ENCODE measurements at regions of chr18 and their contacts with region 1.

Region 1: DNA sequence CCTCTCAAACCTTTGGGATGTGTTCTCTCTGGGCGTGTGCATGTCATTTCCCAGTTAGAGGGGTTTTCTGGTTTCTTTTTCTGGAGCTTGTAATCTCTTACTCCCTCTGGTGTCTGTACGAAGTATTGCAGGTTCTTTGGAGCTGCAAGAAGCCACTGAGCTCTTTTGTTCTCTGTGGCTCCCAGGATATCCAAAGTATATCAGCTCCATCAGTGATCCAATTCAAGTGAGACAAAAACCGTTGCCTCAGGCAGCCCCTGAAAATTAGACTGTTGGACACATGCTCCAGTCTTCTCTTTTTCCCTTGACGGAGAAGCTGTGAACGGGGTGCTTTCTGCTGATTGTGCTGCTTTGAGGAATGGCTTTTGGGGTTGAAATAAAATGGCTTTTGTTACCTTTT is 59.0 kb upstream of the LDLRAD4 start:
- DNase-seq: no peak
- ATAC-seq: peak; percentile 79
- H3K4me3 ChIP-seq: no peak overlapping the region
- H3K27ac ChIP-seq: no peak overlapping the region
- H3K4me1 ChIP-seq: no peaks in the 10 kb centered on the region
- H3K27me3 ChIP-seq: no peaks in the 10 kb centered on the region; a peak in 1 of 4 replicates
- CTCF ChIP-seq: peak; percentile 73 to 80 (median 74)
- EP300 ChIP-seq: no peak
- POLR2A ChIP-seq: no peak
- RAD21 ChIP-seq: peak; percentile 70

Region 2: GRCh38 chr18:12744103-12744502 is 415.5 kb before region 1 on chr18:
- CTCF ChIA-PET with region 1: interaction called, 11 read pairs
- POLR2A ChIA-PET with region 1: no interaction called
- RAD21 ChIA-PET with region 1: interaction called, 17 read pairs
- SMC1A ChIA-PET with region 1: interaction called, 5 read pairs
- in situ Hi-C with region 1: no loop called
- intact Hi-C with region 1: loop called (anchors 5 kb)
- DNase-seq: no peak
- ATAC-seq: peak; percentile 77
- H3K4me3 ChIP-seq: no peak overlapping the region
- H3K27ac ChIP-seq: no peak overlapping the region
- H3K4me1 ChIP-seq: no peaks in the 10 kb centered on the region
- H3K27me3 ChIP-seq: no peaks in the 10 kb centered on the region
- CTCF ChIP-seq: peak; percentile 25 to 62 (median 53); a peak in 5 of 6 replicates
- EP300 ChIP-seq: no peak
- POLR2A ChIP-seq: no peak
- RAD21 ChIP-seq: peak; percentile 87

Region 3: DNA sequence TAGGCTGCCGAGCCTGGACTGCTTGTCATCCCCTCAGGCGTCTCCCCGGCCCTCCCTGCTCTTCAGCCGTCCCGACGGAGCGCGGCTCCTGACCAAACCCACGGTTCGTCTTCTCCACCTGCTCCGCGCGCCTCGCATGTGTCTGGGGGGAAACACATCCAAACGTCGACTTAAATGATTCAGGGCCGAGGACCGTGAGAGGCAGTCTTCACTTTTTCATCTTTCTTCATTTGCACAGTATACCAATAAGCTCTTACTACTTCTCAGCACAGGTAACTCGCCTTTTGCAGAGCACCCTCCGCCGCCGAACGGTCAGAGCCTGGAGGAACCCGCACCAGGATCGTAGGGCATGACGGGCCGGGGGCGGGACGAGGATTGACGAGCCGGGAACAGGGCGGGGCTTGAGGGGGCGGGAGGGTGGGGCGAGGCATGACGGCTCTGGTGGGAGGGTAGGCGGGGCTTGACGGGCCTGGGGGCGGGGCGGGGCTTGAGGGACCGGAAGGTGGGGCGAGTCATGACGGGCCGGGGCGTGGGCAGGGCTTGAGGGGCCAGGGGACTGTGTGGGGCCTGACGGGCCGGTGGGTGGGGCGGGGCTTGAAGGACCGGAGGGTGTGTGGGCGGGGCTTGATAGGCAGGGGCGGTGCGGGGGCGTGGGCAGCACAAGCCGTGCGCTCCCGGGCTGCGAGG is 212.1 kb before region 1 on chr18 and contains the start of gene SEH1L:
- CTCF ChIA-PET with region 1: interaction called, 3 read pairs
- POLR2A ChIA-PET with region 1: interaction called, 3 read pairs
- RAD21 ChIA-PET with region 1: interaction called, 3 read pairs
- SMC1A ChIA-PET with region 1: no interaction called
- in situ Hi-C with region 1: no loop called
- intact Hi-C with region 1: loop called (anchors 10 kb)
- DNase-seq: peak; percentile 89
- ATAC-seq: peak; percentile 92
- H3K4me3 ChIP-seq: peak within 1 kb of the TSS; percentile 92
- H3K27ac ChIP-seq: peak within 1 kb of the TSS; percentile 87
- H3K4me1 ChIP-seq: peaks cover 4% of the 10 kb centered on the region; the same call in 1 of the 2 replicates
- H3K27me3 ChIP-seq: no peaks in the 10 kb centered on the region
- CTCF ChIP-seq: no peak
- EP300 ChIP-seq: no peak
- POLR2A ChIP-seq: 0 out of 2 replicates have a peak, but pooled peaks have one; percentile 7
- RAD21 ChIP-seq: no peak
- polyA plus RNA-seq, gene SEH1L: 27.5 to 52.4 TPM

Region 4: GRCh38 chr18:13022644-13023043 is 136.9 kb before region 1 on chr18:
- CTCF ChIA-PET with region 1: interaction called, 11 read pairs
- POLR2A ChIA-PET with region 1: no interaction called
- RAD21 ChIA-PET with region 1: no interaction called
- SMC1A ChIA-PET with region 1: interaction called, 5 read pairs
- in situ Hi-C with region 1: no loop called
- intact Hi-C with region 1: no loop called
- DNase-seq: no peak
- ATAC-seq: no peak
- H3K4me3 ChIP-seq: no peak overlapping the region
- H3K27ac ChIP-seq: no peak overlapping the region
- H3K4me1 ChIP-seq: peaks cover 4% of the 10 kb centered on the region
- H3K27me3 ChIP-seq: no peaks in the 10 kb centered on the region
- CTCF ChIP-seq: no peak
- EP300 ChIP-seq: no peak
- POLR2A ChIP-seq: no peak
- RAD21 ChIP-seq: no peak

Region 5: DNA sequence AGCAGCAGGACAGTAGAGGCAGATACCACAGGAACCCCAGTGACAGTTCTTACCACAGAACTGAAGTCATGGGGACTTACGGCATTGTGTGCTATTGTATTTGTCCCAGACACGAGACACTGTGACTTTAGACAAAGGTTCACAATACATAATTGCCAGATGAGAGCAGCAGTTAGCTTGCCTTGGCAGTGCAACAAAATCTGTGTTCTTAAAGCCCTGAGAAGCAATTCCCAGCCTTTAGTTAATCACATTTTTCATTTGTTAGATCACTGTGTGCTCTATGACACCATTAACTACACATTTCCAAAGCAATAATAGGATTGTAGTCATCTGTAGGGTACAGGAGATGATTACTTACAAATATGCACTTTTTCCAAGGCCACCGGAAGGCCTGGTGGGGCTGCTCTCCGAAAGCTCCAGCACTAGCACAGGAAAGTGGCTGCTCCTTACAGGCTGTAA is 38.6 kb before region 1 on chr18:
- CTCF ChIA-PET with region 1: interaction called, 14 read pairs
- POLR2A ChIA-PET with region 1: no interaction called
- RAD21 ChIA-PET with region 1: interaction called, 6 read pairs
- SMC1A ChIA-PET with region 1: interaction called, 11 read pairs
- in situ Hi-C with region 1: no loop called
- intact Hi-C with region 1: no loop called
- DNase-seq: no peak
- ATAC-seq: no peak
- H3K4me3 ChIP-seq: no peak overlapping the region
- H3K27ac ChIP-seq: no peak overlapping the region
- H3K4me1 ChIP-seq: no peaks in the 10 kb centered on the region
- H3K27me3 ChIP-seq: no peaks in the 10 kb centered on the region
- CTCF ChIP-seq: no peak
- EP300 ChIP-seq: no peak
- POLR2A ChIP-seq: no peak
- RAD21 ChIP-seq: no peak

Region 6: DNA sequence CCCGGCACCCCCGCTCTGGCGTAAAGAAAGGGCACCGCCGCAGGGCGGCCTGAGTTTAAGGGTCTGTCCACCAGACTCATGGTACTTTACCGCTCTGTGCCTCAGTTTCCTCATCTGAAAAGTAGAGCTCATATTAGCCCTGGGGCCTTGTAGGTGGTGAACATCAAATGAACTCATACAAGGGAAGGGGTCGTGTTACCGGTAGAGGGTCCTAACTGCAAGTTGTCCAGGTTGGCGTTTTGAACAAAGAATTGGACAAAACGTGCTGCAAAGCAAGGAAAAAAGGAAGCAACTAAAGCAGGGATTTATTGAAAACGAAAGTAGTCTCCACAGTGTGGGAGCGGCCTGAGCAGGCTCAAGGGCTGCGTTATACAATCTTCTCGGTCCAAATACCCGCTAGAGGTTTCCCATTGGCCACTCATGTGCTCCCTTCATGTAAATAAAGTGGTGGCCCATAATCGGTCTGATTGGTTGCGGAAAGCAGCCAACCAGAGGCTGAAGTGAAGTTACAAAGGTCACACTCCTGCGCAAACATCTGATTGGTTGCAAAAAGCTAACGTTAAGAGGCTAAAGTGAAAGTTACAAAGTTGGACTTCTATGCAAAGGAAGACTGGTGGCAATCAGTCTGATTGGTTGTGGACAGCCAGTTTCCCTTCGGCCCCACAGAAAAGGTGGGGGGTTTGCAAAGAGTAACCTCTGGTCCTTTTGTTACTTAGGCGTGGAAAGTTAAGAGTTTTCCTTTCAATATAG is 21.7 kb before region 1 on chr18:
- CTCF ChIA-PET with region 1: interaction called, 21 read pairs
- POLR2A ChIA-PET with region 1: no interaction called
- RAD21 ChIA-PET with region 1: interaction called, 10 read pairs
- SMC1A ChIA-PET with region 1: interaction called, 9 read pairs
- in situ Hi-C with region 1: no loop called
- intact Hi-C with region 1: no loop called
- DNase-seq: peak; percentile 77
- ATAC-seq: peak; percentile 89
- H3K4me3 ChIP-seq: peak overlapping the region; percentile 82
- H3K27ac ChIP-seq: peak overlapping the region; percentile 38
- H3K4me1 ChIP-seq: peaks cover 12% of the 10 kb centered on the region
- H3K27me3 ChIP-seq: no peaks in the 10 kb centered on the region
- CTCF ChIP-seq: no peak
- EP300 ChIP-seq: no peak
- POLR2A ChIP-seq: no peak
- RAD21 ChIP-seq: no peak

Region 7: GRCh38 chr18:13629841-13630715 is 470.5 kb after region 1 on chr18:
- CTCF ChIA-PET with region 1: interaction called, 5 read pairs
- POLR2A ChIA-PET with region 1: no interaction called
- RAD21 ChIA-PET with region 1: interaction called, 3 read pairs
- SMC1A ChIA-PET with region 1: no interaction called
- in situ Hi-C with region 1: loop called (anchors 25 kb)
- intact Hi-C with region 1: no loop called
- DNase-seq: peak; percentile 48
- ATAC-seq: peak; percentile 92
- H3K4me3 ChIP-seq: no peak overlapping the region
- H3K27ac ChIP-seq: no peak overlapping the region; the same call in 1 of the 2 replicates
- H3K4me1 ChIP-seq: peaks cover 5% of the 10 kb centered on the region
- H3K27me3 ChIP-seq: no peaks in the 10 kb centered on the region
- CTCF ChIP-seq: peak; percentile 76 to 98 (median 81)
- EP300 ChIP-seq: no peak
- POLR2A ChIP-seq: no peak
- RAD21 ChIP-seq: peak; percentile 100